ENCODE measurements at regions of chr5 and their contacts with region 1.

Region 1: DNA sequence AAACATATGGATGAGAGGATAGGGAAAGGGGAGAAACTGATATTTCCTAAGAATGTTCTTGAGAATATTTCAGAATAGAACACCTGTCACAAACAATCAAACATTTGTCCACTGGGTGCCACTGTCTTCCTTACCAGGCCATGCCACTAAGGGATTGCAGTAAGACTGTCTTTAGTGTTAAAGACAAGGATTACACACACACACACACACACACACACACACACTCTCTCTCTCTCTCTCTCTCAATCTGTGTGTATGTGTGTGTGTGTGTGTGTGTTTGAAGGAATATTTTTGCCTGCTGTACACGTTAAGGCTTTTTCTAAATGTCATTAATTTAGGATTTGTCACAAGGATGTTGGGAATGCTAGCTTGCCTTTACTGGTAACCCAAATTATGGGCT is 54.4 kb downstream of the CCDC192 start:
- DNase-seq: peak; percentile 77
- H3K4me3 Mint-ChIP-seq: no peak overlapping the region
- H3K27ac Mint-ChIP-seq: peak overlapping the region; percentile 35
- H3K4me1 Mint-ChIP-seq: peaks cover 42% of the 10 kb centered on the region
- H3K27me3 Mint-ChIP-seq: no peaks in the 10 kb centered on the region
- CTCF ChIP-seq: peak; percentile 86

Region 2: GRCh38 chr5:127813633-127814587 is 56.3 kb after region 1 on chr5:
- CTCF ChIA-PET with region 1: no interaction called
- intact Hi-C with region 1: loop called (anchors 5 kb)
- DNase-seq: peak; percentile 40
- H3K4me3 Mint-ChIP-seq: peak overlapping the region; percentile 29
- H3K27ac Mint-ChIP-seq: peak overlapping the region; percentile 71
- H3K4me1 Mint-ChIP-seq: peaks cover 49% of the 10 kb centered on the region
- H3K27me3 Mint-ChIP-seq: no peaks in the 10 kb centered on the region
- CTCF ChIP-seq: no peak

Region 3: DNA sequence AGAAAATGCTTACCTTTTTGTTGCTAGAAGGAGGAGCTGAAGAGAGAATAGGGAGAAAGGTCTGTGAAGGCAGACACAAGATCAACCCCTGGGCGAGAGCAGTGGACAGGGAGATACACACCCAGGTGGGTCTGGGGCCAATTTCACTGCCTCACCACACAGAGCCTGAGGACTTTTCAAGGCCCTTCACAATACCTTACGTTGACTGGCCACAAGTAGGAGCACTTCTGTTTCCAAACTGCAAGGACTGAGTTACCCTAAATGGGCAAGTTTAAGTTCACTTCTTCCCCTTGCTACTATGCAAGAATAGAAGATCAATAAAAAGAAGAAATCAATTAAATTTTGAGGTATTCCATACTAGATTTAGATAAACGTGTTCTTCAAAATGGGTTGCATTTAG is 151.5 kb after region 1 on chr5:
- CTCF ChIA-PET with region 1: interaction called, 10 read pairs
- intact Hi-C with region 1: loop called (anchors 1 kb)
- DNase-seq: peak; percentile 71
- H3K4me3 Mint-ChIP-seq: no peak overlapping the region
- H3K27ac Mint-ChIP-seq: peak overlapping the region; percentile 83
- H3K4me1 Mint-ChIP-seq: peaks cover 61% of the 10 kb centered on the region
- H3K27me3 Mint-ChIP-seq: no peaks in the 10 kb centered on the region
- CTCF ChIP-seq: peak; percentile 72

Region 4: DNA sequence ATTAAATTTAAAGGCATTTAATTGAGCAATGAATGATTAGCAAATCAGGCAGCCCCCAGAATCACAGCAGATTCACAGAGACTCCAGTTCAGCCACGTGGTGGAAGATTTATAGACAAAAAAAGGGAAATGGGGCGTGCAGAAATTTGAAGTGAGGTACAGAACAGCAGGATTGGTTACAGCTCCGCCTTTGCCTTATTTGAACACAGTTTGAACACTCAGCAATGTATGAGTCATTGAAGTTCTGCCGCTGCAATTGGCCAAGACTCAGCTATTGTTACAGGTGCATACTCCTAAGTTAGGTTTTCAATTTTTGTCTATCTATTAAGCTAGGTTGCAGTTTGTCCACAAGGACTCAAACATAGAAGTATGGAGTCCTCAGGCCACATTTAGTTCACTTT is 168.3 kb after region 1 on chr5:
- CTCF ChIA-PET with region 1: interaction called, 5 read pairs
- intact Hi-C with region 1: loop called (anchors 5 kb)
- DNase-seq: peak; percentile 65
- H3K4me3 Mint-ChIP-seq: no peak overlapping the region
- H3K27ac Mint-ChIP-seq: peak overlapping the region; percentile 90
- H3K4me1 Mint-ChIP-seq: peaks cover 92% of the 10 kb centered on the region
- H3K27me3 Mint-ChIP-seq: no peaks in the 10 kb centered on the region
- CTCF ChIP-seq: no peak

Region 5: DNA sequence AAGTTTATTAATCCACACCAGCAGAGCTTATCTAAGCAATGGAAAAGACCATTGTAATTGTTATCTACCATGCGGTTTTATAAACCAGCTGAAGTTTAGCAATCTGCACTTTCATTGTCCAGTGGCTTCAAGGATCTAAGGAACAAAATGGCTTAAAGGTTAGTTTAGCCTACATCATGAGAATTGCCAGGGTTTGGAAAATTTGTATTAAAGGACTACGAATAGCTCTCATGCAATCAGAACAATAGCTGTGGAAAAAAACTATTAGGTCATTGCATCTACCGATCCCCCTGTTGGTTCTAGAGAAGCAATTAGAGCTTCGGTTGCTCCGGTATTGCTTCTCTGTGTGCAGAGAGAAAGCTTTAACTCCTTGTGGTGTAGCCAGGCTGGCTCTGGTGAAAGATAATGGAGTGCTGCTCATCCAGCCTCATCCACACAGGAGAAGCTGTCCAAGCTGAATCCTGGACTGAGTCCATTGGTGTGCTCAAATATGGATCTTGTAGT is 239.7 kb after region 1 on chr5:
- CTCF ChIA-PET with region 1: no interaction called
- intact Hi-C with region 1: loop called (anchors 10 kb)
- DNase-seq: no peak
- H3K4me3 Mint-ChIP-seq: peak overlapping the region; percentile 24
- H3K27ac Mint-ChIP-seq: peak overlapping the region; percentile 51
- H3K4me1 Mint-ChIP-seq: peaks cover 53% of the 10 kb centered on the region
- H3K27me3 Mint-ChIP-seq: no peaks in the 10 kb centered on the region
- CTCF ChIP-seq: no peak

Region 6: DNA sequence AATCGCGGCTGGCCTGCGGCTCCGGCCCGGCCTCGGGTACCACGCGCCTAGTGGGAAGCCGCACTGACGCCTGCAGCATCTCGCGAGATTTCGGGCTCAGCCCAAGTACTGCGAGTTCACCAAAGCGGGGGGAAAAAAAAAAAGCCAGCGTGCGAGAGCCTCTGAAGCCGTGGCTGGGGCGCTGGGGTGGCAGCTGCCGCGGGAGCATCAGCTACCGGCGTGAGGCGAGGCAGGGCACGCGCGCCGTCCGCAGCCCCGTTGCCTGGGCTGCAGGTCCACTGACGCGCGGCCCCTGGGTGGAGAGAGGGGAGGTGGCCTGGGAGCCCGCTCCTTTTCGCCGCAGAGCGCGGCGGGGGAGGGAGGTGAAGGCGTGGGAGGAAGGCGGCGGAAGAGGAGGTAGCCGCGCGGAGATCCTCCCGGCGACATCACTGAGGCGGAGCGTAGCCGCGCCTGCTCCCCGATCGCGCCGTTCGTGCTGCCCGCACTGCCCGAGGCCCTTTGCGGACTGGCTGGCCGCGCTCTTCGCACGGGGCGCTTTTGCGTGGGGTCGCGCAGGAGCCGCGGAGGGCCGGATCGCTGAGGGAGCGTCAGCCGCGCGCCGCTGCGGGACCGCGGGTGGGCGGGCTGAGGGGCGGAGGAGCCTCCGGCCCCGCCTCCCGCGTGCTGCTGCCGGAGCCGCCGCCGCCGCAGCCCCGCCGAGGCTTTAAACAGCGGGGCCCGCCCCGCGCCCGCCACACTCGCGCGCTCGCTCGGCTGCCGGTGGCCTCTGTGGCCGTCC is 325.6 kb after region 1 on chr5 and contains the start of gene SLC12A2:
- CTCF ChIA-PET with region 1: no interaction called
- intact Hi-C with region 1: loop called (anchors 5 kb)
- DNase-seq: peak; percentile 92
- H3K4me3 Mint-ChIP-seq: peak within 1 kb of the TSS; percentile 91
- H3K27ac Mint-ChIP-seq: peak within 1 kb of the TSS; percentile 87
- H3K4me1 Mint-ChIP-seq: peaks cover 51% of the 10 kb centered on the region
- H3K27me3 Mint-ChIP-seq: no peaks in the 10 kb centered on the region
- CTCF ChIP-seq: no peak
- total RNA-seq, gene SLC12A2: 393 and 576 TPM in 2 replicates

Measured in Calu3 (cell line).